Activated CD4-positive, alpha-beta T cell treated with anti-CD3 and anti-CD28 coated beads for 36 hours (primary cell): ENCODE measurements at regions of chr2 and their contacts with region 1.

Region 1: DNA sequence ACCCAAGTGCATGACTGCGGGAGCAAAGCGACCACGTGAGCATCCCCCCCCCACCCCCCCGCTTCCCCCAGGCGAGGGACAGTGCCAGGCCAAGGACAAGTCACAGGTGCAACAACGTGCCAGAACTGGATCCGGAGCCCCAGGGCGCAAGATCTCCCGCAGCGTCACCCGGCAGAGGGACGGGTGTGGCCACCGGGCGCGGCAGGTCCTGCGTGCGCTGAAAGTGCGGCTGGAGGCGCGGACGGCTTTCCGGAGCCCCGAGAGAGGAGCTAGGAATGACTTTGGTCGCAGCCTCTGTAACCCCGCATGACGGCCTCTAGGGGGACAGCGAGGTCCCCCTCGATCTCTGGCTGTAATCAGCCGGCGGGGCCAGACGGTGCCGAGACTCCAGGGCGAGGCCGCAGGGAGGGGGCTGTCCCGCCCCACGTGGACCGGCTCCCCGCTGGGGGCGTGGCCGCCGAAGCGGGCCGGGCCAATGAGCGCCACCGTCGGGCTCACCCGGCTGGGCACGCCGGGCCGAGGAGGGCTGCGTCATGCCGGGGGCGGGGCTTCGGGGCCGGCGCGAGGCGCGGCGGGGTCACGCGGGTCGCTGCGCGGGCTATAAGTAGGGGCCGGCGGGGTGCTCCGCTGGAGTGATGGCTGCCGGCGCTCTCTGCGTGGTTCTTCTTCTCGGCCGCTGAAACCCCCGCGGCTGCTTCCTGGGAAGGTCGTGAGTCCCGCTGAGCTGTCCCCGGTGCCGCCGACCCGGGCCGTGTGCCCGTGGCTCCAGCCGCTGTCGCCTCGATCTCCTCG is at the start of gene SLC20A1:
- DNase-seq: peak; percentile 99
- ATAC-seq: peak; percentile 89
- H3K4me3 Mint-ChIP-seq: peak within 1 kb of the TSS; percentile 95
- H3K27ac Mint-ChIP-seq: peak within 1 kb of the TSS; percentile 79
- H3K4me1 Mint-ChIP-seq: peaks cover 58% of the 10 kb centered on the region
- H3K27me3 Mint-ChIP-seq: no peaks in the 10 kb centered on the region
- total RNA-seq, gene SLC20A1: 69.3 to 69.6 TPM

Region 2: DNA sequence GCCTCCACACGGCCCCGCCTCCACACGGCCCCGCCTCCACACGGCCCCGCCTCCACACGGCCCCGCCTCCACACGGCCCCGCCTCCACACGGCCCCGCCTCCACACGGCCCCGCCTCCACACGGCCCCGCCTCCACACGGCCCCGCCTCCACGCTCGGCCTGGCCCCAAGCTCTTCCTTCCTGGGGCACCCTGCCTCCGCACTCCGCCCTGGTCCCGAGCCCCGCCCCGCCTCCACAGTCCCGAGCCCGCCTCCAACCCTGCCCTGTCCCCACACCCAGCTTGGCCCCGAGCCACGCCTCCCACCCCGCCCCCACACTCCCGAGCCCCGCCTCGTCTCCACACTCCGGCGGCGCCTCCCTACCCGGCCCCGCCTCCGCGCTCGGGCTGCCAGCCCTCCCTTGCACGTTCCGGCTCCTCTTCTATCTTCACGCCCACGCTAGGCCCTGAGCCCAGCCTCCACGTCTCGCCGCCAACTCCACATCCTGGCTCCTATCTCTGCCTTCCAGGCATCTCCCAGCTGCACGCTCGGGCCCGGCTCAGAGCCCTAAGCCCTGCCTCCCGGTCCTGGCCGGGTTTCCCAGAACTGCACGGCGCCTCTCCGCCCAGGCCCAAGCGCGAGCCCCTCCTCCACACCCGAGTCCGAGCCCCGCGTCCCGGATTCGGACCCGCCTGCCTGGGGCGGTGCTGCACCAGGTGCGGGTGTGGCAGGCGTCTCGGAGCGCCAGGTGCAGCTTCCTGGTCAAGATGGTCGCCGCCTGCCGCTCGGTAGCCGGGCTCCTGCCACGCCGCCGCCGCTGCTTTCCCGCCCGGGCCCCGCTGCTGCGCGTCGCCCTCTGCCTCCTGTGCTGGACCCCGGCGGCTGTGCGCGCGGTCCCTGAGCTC is 590.4 kb before region 1 on chr2 and contains the start of gene TMEM87B:
- CTCF ChIA-PET with region 1: no interaction called
- POLR2A ChIA-PET with region 1: no interaction called
- intact Hi-C with region 1: loop called in 1 of 2 experiments (anchors 1 kb)
- DNase-seq: peak; percentile 100
- ATAC-seq: peak; percentile 79
- H3K4me3 Mint-ChIP-seq: peak within 1 kb of the TSS; percentile 97
- H3K27ac Mint-ChIP-seq: peak within 1 kb of the TSS; percentile 99
- H3K4me1 Mint-ChIP-seq: peaks cover 37% of the 10 kb centered on the region
- H3K27me3 Mint-ChIP-seq: no peaks in the 10 kb centered on the region
- total RNA-seq, gene TMEM87B: 14.5 to 17.6 TPM

Region 3: DNA sequence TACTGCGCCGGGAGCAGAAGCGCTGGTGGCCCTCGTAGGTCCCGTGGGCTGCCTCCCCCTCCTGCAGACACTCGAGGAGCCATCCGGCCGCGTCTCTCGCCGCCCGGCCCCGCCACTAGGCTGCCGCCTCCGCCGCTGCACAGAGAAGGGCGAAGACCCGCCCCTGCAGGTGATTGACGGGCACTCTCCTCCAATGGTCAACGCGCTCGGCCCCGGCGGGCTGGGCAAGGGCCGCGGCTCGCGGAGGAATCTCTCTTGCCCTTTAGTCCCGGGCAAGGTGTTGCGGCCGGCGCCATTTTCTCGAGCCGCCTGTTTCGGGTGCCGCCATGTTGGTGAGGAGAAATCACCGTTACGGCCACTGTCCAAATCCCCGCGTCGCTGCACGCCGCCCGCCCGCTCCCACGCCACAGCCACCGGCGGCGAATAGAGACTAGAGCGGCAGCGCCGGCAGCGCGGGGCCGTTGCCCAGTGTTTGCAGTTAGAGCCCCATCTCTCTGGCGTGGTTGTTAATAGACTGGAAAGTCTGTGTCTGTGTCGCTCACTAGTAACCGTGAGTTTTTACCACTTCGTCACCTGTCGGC is 370.1 kb before region 1 on chr2 and contains the start of gene ZC3H6:
- CTCF ChIA-PET with region 1: no interaction called
- POLR2A ChIA-PET with region 1: no interaction called
- intact Hi-C with region 1: loop called in 1 of 2 experiments (anchors 1 kb)
- DNase-seq: peak; percentile 100
- ATAC-seq: peak; percentile 98
- H3K4me3 Mint-ChIP-seq: peak within 1 kb of the TSS; percentile 90
- H3K27ac Mint-ChIP-seq: peak within 1 kb of the TSS; percentile 97
- H3K4me1 Mint-ChIP-seq: peaks cover 26% of the 10 kb centered on the region
- H3K27me3 Mint-ChIP-seq: no peaks in the 10 kb centered on the region
- total RNA-seq, gene ZC3H6: 15.1 to 15.3 TPM

Region 4: DNA sequence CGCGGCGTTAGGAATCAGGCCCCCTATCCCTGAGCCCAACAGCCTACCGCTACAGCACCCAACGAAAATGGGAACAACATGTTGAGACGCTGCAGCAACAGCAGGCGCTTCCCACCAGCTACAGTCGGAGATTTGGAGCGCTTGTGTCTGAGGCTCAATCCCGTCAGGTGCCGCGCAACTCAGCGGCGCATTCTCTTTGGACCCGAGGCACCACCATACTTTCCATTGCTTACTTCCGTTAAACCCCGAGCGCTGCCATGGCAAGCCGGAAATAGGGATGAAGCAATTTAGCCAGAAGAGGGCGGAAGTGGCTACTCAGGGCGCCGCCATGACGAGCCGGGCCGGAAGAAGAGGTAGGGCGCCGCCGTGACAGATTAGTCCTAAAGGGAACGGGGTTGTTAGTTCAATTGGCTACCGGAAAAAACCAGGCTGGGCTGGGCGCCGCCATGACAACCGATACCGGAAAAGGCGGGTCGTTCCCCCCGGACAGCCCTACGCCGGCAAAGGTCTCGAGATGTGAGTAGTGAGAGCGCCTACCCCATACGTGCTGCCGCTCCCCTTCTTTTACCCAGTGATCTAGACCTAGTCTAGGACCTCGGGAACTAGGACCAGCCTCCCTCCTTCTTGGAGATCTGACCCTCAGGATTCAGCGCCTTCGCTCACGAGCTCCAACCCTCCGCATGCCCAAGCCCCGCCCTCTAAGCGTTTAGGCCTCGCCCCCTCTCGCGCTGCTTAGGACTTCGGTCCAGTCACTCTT is 61.2 kb before region 1 on chr2 and contains the start of gene CHCHD5:
- CTCF ChIA-PET with region 1: interaction called, 3 read pairs
- POLR2A ChIA-PET with region 1: interaction called, 3 read pairs
- intact Hi-C with region 1: loop called (anchors 1 kb)
- DNase-seq: peak; percentile 96
- ATAC-seq: peak; percentile 89
- H3K4me3 Mint-ChIP-seq: peak within 1 kb of the TSS; percentile 95
- H3K27ac Mint-ChIP-seq: peak within 1 kb of the TSS; percentile 93
- H3K4me1 Mint-ChIP-seq: peaks cover 28% of the 10 kb centered on the region
- H3K27me3 Mint-ChIP-seq: no peaks in the 10 kb centered on the region
- total RNA-seq, gene CHCHD5: 34.4 to 37.0 TPM

Region 5: GRCh38 chr2:112692496-112692911 is 47.0 kb after region 1 on chr2:
- CTCF ChIA-PET with region 1: interaction called, 6 read pairs
- POLR2A ChIA-PET with region 1: interaction called, 10 read pairs
- intact Hi-C with region 1: loop called (anchors 1 to 5 kb)
- DNase-seq: peak; percentile 81
- ATAC-seq: peak; percentile 92
- H3K4me3 Mint-ChIP-seq: peak overlapping the region; percentile 7
- H3K27ac Mint-ChIP-seq: peak overlapping the region; percentile 87
- H3K4me1 Mint-ChIP-seq: peaks cover 33% of the 10 kb centered on the region
- H3K27me3 Mint-ChIP-seq: no peaks in the 10 kb centered on the region

Region 6: GRCh38 chr2:112764071-112765044 is 118.9 kb after region 1 on chr2 and contains the start of gene CKAP2L:
- CTCF ChIA-PET with region 1: no interaction called
- POLR2A ChIA-PET with region 1: no interaction called
- intact Hi-C with region 1: loop called in 1 of 2 experiments (anchors 1 kb)
- DNase-seq: peak; percentile 98
- ATAC-seq: peak; percentile 97
- H3K4me3 Mint-ChIP-seq: peak within 1 kb of the TSS; percentile 96
- H3K27ac Mint-ChIP-seq: peak within 1 kb of the TSS; percentile 95
- H3K4me1 Mint-ChIP-seq: peaks cover 25% of the 10 kb centered on the region
- H3K27me3 Mint-ChIP-seq: no peaks in the 10 kb centered on the region
- total RNA-seq, gene CKAP2L: 38.4 to 46.7 TPM